Activated CD4-positive, alpha-beta memory T cell treated with anti-CD3 and anti-CD28 coated beads, Interleukin-2, amount 10 ng/mL, durations not matched to agents 7 days and 5 days (primary cell): ENCODE measurements at regions of chr22 and their contacts with region 1.

Region 1: DNA sequence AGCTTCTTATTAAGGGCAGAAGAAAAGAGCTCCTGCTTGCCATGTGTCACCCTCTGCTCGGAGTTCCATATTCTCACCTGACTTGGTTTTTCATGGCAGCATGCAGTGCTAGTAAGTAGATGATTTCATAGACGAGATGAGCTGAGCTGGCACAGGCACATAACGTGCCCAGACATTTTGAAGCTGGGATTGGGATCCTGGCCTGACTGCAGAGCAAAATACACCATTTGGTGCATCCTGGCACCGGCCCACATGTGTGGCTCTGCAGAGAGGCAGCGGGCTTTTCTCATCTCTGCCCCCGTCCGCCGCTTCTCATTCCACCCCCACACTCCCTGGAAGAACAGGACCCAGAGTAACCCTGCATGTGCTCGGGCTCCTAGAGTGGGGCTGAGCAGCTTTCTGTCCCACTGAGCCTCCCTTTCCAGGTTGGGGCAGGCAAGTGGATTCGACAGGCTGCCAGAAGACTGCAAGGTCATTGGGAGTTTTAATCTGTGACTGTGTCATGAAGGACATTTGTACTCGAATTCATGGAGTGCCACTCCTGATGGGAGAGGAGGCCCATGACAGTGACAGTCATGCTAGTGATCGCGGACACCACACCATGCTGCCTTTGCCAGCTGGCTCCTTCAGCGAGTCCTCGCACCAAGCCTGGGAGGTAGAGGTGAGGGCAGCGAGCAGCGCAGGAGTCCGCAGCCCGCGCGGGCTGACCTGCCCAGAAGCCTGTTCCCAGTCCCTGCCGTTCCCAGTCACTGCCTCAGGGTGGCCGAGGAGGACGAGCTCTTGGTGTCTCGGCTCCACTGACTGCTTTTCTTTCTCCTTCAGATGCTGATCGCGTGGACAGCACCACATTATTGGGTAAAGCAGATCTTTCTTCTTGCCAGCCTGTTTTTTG is 25.0 kb downstream of the FAM118A start:
- DNase-seq: no peak
- H3K4me3 Mint-ChIP-seq: no peak overlapping the region
- H3K27ac Mint-ChIP-seq: no peak overlapping the region
- H3K4me1 Mint-ChIP-seq: peaks cover 10% of the 10 kb centered on the region
- H3K27me3 Mint-ChIP-seq: no peaks in the 10 kb centered on the region

Region 2: GRCh38 chr22:45318168-45318557 is 16.6 kb before region 1 on chr22:
- CTCF ChIA-PET with region 1: no interaction called
- POLR2A ChIA-PET with region 1: interaction called, 13 read pairs
- DNase-seq: peak; percentile 89
- H3K4me3 Mint-ChIP-seq: peak overlapping the region; percentile 79
- H3K27ac Mint-ChIP-seq: peak overlapping the region; percentile 97
- H3K4me1 Mint-ChIP-seq: peaks cover 74% of the 10 kb centered on the region
- H3K27me3 Mint-ChIP-seq: no peaks in the 10 kb centered on the region